ENCODE measurements at regions of chr18 and their contacts with region 1.

Region 1: DNA sequence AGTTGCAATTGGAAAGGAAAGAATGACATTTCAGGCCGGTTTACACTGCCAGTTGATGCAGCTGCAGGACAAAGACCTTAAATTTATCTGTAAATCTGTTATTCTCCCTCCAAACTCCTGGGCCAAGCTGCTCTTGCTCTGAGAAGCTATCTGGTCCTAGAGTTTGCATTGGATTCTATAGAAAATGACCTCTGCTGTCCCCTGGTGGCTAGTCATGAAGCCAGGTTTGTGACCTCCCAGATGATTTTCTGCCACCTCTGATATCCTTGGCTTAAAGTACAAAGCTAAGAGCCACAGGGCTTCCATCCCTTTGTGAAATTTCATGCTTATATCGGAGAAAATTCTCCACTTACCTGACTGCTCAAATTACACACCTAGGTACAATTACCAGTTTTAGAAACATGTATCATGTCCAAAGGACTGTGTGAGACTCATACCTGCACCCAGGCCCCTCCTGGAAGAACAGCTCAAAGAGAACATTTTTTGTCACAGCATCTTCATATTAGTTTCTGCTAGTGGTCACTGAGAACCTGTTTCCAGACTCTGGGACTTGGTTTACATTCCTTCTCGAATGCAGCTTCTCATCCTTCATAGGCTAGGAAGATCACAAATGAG is 28.9 kb upstream of the IER3IP1 start:
- DNase-seq: no peak
- H3K4me3 ChIP-seq: no peak overlapping the region
- H3K27ac ChIP-seq: no peak overlapping the region
- H3K4me1 ChIP-seq: no peaks in the 10 kb centered on the region
- H3K27me3 ChIP-seq: no peaks in the 10 kb centered on the region
- CTCF ChIP-seq: peak; percentile 41 to 61 (median 45)

Region 2: DNA sequence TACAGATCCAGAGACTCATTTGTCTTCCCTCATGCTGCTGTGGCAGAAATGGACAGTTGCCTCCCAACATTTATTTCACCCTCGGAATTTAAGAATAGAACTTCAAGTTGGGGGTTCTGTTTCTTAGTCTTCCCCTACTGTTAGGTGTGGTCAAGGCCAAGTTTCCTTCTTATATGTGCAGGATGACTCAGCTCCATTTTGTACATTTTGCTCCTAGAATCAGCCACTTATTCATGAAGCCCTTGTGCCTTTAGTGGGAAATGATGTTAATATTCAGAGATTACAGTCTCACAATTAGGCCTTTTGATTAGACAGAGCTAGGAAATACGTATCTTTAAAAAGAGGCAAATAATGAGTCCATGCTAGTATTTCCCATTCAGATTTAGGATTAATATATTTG is 123.4 kb before region 1 on chr18:
- intact Hi-C with region 1: no loop called
- DNase-seq: no peak
- H3K4me3 ChIP-seq: no peak overlapping the region
- H3K27ac ChIP-seq: no peak overlapping the region
- H3K4me1 ChIP-seq: no peaks in the 10 kb centered on the region
- H3K27me3 ChIP-seq: no peaks in the 10 kb centered on the region
- CTCF ChIP-seq: no peak

Region 3: GRCh38 chr18:47100214-47100831 is 104.7 kb before region 1 on chr18:
- intact Hi-C with region 1: loop called (anchors 1 kb)
- DNase-seq: peak in 1 of 2 donors; percentile 66
- H3K4me3 ChIP-seq: no peak overlapping the region
- H3K27ac ChIP-seq: no peak overlapping the region
- H3K4me1 ChIP-seq: no peaks in the 10 kb centered on the region
- H3K27me3 ChIP-seq: no peaks in the 10 kb centered on the region
- CTCF ChIP-seq: peak; percentile 44 to 78 (median 54)

Measured in ascending aorta (tissue), 2 donors.